ENCODE measurements at regions of chr11 and their contacts with region 1.

Region 1: GRCh38 chr11:61792310-61793085 is at the starts of genes FEN1 and TMEM258:
- DNase-seq: peak; percentile 87 to 93
- ATAC-seq: peak; percentile 83 to 92 (median 88)
- H3K4me3 ChIP-seq: peak within 1 kb of the TSS; percentile 64
- H3K4me3 Mint-ChIP-seq: peak within 1 kb of the TSS; percentile 96
- H3K27ac ChIP-seq: peak within 1 kb of the TSS; percentile 89
- H3K27ac Mint-ChIP-seq: peak within 1 kb of the TSS; percentile 98 to 99
- H3K4me1 ChIP-seq: peaks cover 20% of the 10 kb centered on the region
- H3K4me1 Mint-ChIP-seq: peaks cover 17 to 43% of the 10 kb centered on the region in 2 donors
- H3K27me3 ChIP-seq: no peaks in the 10 kb centered on the region
- H3K27me3 Mint-ChIP-seq: no peaks in the 10 kb centered on the region
- CTCF ChIP-seq: no peak
- total RNA-seq, gene FEN1: 14.2 to 17.8 (median 17.5) TPM
- total RNA-seq, gene TMEM258: 64.4 to 69.3 (median 66.1) TPM

Region 2: DNA sequence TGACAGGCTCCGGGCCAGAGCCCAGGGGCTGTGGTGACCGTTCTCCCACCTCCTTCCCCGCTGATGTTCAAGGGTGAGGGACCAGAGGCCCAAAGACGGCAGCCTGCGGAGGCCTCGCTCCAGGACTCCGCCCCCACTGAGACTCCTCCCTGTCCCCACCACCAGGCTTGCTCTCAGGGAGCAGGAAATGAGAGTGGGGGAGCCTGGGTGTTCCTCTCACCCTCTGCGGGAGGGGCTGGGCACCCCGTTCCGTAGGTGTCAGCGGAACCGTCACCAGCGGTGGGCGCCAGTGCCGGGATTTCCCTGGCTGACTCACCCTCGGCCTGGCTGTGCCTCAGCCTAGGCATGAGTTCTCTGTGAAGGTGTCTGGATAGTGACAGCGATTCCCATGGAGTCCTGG is 96.6 kb before region 1 on chr11:
- intact Hi-C with region 1: no loop called
- DNase-seq: peak; percentile 88 to 96
- ATAC-seq: peak; percentile 96 to 98 (median 97)
- H3K4me3 ChIP-seq: no peak overlapping the region
- H3K4me3 Mint-ChIP-seq: peak overlapping the region; percentile 78
- H3K27ac ChIP-seq: no peak overlapping the region
- H3K27ac Mint-ChIP-seq: peak overlapping the region; percentile 85 to 90
- H3K4me1 ChIP-seq: peaks cover 41% of the 10 kb centered on the region
- H3K4me1 Mint-ChIP-seq: peaks cover 20 to 35% of the 10 kb centered on the region in 2 donors
- H3K27me3 ChIP-seq: no peaks in the 10 kb centered on the region
- H3K27me3 Mint-ChIP-seq: no peaks in the 10 kb centered on the region
- CTCF ChIP-seq: no peak

Region 3: GRCh38 chr11:61827571-61828378 is 35.3 kb after region 1 on chr11 and contains the start of gene FADS2:
- intact Hi-C with region 1: loop called (anchors 5 kb)
- DNase-seq: peak; percentile 69 to 77
- ATAC-seq: peak; percentile 79 to 83 (median 83)
- H3K4me3 ChIP-seq: peak within 1 kb of the TSS; percentile 62
- H3K4me3 Mint-ChIP-seq: peak within 1 kb of the TSS; percentile 92
- H3K27ac ChIP-seq: peak within 1 kb of the TSS; percentile 44
- H3K27ac Mint-ChIP-seq: peak within 1 kb of the TSS; percentile 88 to 97
- H3K4me1 ChIP-seq: peaks cover 32% of the 10 kb centered on the region
- H3K4me1 Mint-ChIP-seq: peaks cover 32 to 58% of the 10 kb centered on the region in 2 donors
- H3K27me3 ChIP-seq: no peaks in the 10 kb centered on the region
- H3K27me3 Mint-ChIP-seq: no peaks in the 10 kb centered on the region
- CTCF ChIP-seq: no peak
- total RNA-seq, gene FADS2: 30.4 to 52.7 (median 34.4) TPM

Region 4: DNA sequence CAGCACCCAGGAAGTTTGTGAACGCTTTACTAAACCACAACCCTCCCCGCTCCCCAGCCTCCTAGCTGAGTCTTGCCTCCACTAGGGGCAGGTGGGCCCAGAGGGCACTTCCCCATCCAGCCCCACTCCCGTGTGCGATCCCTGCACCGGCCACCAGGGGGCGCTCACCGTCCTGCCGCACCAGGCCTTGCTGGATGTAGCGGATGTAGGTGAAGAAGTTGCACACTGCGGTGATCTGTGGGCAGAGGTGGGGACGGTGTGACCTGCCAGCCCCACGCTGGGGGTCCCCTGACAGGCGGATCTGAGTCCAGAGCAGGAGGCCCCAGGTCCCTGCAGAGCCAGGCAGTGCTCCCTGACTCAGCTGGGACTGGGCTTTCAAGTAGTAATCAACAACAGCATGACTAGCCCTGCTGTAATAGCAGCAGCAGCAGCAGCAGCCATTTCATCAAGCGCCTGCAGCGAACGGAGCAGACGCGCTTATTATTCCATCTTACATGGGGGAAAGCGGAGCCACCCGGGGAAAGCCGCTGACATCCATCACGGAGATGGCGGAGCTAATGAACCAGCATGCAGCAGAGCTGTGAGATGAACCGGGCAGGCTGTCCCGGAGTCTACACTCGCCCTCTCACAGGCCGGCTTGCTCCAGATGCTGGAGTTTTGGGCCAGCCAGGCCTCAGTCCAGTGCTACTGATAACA is 106.8 kb after region 1 on chr11:
- intact Hi-C with region 1: loop called (anchors 1 kb)
- DNase-seq: peak; percentile 92 to 94
- ATAC-seq: peak; percentile 95 to 96 (median 95)
- H3K4me3 ChIP-seq: no peak overlapping the region
- H3K4me3 Mint-ChIP-seq: peak overlapping the region; percentile 28
- H3K27ac ChIP-seq: no peak overlapping the region
- H3K27ac Mint-ChIP-seq: peak overlapping the region; percentile 50 to 74
- H3K4me1 ChIP-seq: peaks cover 11% of the 10 kb centered on the region
- H3K4me1 Mint-ChIP-seq: peaks cover 0 to 7% of the 10 kb centered on the region in 2 donors
- H3K27me3 ChIP-seq: no peaks in the 10 kb centered on the region
- H3K27me3 Mint-ChIP-seq: peaks cover 0 to 3% of the 10 kb centered on the region in 2 donors
- CTCF ChIP-seq: peak; percentile 99

Region 5: GRCh38 chr11:62081378-62082291 is 289.1 kb after region 1 on chr11:
- intact Hi-C with region 1: loop called (anchors 1 kb)
- DNase-seq: peak; percentile 74 to 86
- ATAC-seq: peak; percentile 87 to 99 (median 93)
- H3K4me3 ChIP-seq: no peak overlapping the region
- H3K4me3 Mint-ChIP-seq: no peak overlapping the region
- H3K27ac ChIP-seq: no peak overlapping the region
- H3K27ac Mint-ChIP-seq: no peak overlapping the region
- H3K4me1 ChIP-seq: peaks cover 5% of the 10 kb centered on the region
- H3K4me1 Mint-ChIP-seq: peaks cover 7% of the 10 kb centered on the region in 2 donors
- H3K27me3 ChIP-seq: no peaks in the 10 kb centered on the region
- H3K27me3 Mint-ChIP-seq: peaks cover 0 to 6% of the 10 kb centered on the region in 2 donors
- CTCF ChIP-seq: peak; percentile 92

Region 6: DNA sequence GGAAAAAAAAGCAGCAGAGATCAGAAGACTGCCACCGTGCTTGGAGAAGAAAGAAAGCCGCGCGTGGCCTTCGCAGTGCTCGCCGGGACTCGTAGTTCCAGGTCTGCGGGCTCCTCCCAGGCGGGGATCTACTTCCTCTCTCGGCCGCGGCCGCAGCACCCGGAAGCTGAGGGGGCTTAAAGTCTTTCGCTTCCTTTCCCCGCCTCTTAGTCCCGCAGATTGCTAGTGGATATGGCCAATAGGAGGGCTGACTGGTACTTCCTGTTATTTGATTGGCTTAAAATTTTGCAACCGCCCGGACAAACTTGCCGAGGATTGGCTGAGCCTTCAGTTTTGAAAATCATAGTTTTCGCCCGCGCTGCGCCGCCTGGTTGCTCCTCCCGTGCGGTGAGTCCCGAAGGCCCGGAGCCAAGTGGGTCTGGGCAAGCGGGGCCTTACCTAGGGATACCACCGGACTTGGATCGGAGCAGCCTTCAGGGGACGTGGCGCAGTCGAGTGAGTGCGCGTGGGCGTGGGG is 331.2 kb after region 1 on chr11 and contains the start of gene INCENP:
- intact Hi-C with region 1: loop called (anchors 1 kb)
- DNase-seq: peak; percentile 88 to 98
- ATAC-seq: peak; percentile 98 to 99 (median 99)
- H3K4me3 ChIP-seq: peak within 1 kb of the TSS; percentile 81
- H3K4me3 Mint-ChIP-seq: peak within 1 kb of the TSS; percentile 95
- H3K27ac ChIP-seq: peak within 1 kb of the TSS; percentile 59
- H3K27ac Mint-ChIP-seq: peak within 1 kb of the TSS; percentile 85 to 90
- H3K4me1 ChIP-seq: peaks cover 17% of the 10 kb centered on the region
- H3K4me1 Mint-ChIP-seq: peaks cover 27 to 30% of the 10 kb centered on the region in 2 donors
- H3K27me3 ChIP-seq: no peaks in the 10 kb centered on the region
- H3K27me3 Mint-ChIP-seq: peaks cover 0 to 6% of the 10 kb centered on the region in 2 donors
- CTCF ChIP-seq: no peak
- total RNA-seq, gene INCENP: 24.4 to 47.6 (median 27.3) TPM